ENCODE measurements at regions of chr7 and their contacts with region 1.

Region 1: GRCh38 chr7:127347567-127348246 is 44.8 kb downstream of the ZNF800 start:
- DNase-seq: peak; percentile 48 to 90 (median 68)
- ATAC-seq: peak; percentile 99
- H3K4me3 ChIP-seq: peak overlapping the region; percentile 38
- H3K4me3 Mint-ChIP-seq: peak overlapping the region; percentile 36
- H3K27ac ChIP-seq: no peak overlapping the region
- H3K27ac Mint-ChIP-seq: no peak overlapping the region
- H3K4me1 ChIP-seq: peaks cover 7% of the 10 kb centered on the region
- H3K4me1 Mint-ChIP-seq: peaks cover 36% of the 10 kb centered on the region
- H3K27me3 ChIP-seq: no peaks in the 10 kb centered on the region
- H3K27me3 Mint-ChIP-seq: no peaks in the 10 kb centered on the region
- CTCF ChIP-seq: peak; percentile 42

Region 2: GRCh38 chr7:127239814-127240213 is 107.9 kb before region 1 on chr7:
- CTCF ChIA-PET with region 1: no interaction called
- POLR2A ChIA-PET with region 1: no interaction called
- intact Hi-C with region 1: no loop called
- DNase-seq: no peak
- ATAC-seq: no peak
- H3K4me3 ChIP-seq: no peak overlapping the region
- H3K4me3 Mint-ChIP-seq: no peak overlapping the region
- H3K27ac ChIP-seq: no peak overlapping the region
- H3K27ac Mint-ChIP-seq: no peak overlapping the region
- H3K4me1 ChIP-seq: no peaks in the 10 kb centered on the region
- H3K4me1 Mint-ChIP-seq: no peaks in the 10 kb centered on the region
- H3K27me3 ChIP-seq: peaks cover 0 to 29% of the 10 kb centered on the region in 2 experiments
- H3K27me3 Mint-ChIP-seq: peaks cover 66% of the 10 kb centered on the region
- CTCF ChIP-seq: no peak

Region 3: DNA sequence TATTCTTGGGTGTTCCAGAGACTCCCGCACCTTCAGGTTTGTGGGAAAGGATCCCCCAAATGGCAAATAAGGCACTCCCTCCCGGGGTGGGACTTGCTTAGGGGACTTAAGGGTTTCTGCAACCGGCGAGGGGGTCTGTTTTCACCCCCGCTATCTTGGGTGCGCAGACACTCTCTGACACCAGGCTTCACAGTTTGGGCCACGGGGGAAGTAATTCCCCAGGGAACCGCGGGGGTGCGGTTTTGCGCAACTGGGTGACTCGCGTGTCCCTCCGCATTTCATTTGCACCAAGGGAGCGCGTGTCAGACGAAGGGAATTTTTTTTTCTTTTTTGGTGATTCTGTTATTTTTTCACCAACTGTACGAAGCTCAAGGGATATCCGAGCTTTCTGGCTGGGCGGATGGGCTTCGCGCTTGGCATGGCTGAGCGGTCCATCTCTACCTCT is 96.7 kb before region 1 on chr7:
- CTCF ChIA-PET with region 1: no interaction called
- POLR2A ChIA-PET with region 1: no interaction called
- intact Hi-C with region 1: no loop called
- DNase-seq: peak in 2 of 14 experiments; percentile 17 to 19
- ATAC-seq: no peak
- H3K4me3 ChIP-seq: no peak overlapping the region
- H3K4me3 Mint-ChIP-seq: peak overlapping the region; percentile 69
- H3K27ac ChIP-seq: no peak overlapping the region
- H3K27ac Mint-ChIP-seq: no peak overlapping the region
- H3K4me1 ChIP-seq: peaks cover 33% of the 10 kb centered on the region
- H3K4me1 Mint-ChIP-seq: peaks cover 27% of the 10 kb centered on the region
- H3K27me3 ChIP-seq: peaks cover 45 to 79% of the 10 kb centered on the region in 2 experiments
- H3K27me3 Mint-ChIP-seq: peaks cover 84% of the 10 kb centered on the region
- CTCF ChIP-seq: no peak

Region 4: DNA sequence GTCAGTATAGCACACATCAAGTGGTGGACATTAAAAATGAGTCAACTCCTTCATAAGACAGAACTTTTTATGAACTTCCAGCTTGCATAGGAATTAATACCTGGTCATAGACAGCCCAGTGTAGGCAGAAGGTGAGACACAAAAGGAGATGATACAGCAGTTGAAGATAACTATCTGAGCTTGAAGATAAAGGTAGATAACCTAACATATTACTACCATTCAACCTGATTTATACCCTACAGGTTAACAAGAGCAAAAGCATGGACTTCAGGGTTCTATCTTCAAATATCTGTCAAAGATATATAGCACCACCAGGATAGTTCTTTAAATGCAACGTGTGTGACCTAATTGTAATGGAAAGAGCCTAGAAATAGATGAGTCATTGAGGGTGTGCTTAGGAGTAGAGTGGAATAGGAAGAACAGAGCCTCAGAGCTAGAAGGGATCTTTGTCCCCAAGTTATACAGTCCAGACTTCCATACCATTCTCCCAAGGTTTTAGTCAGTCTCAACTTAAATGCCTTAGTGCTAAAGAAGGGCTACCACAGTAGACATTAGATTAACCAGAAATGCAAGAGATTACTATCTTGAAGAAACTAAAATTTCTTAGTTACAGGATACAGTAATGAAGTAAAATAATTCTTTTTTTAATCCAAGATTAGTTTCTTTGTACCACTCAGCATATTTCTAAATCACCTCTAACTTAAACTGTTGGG is 35.6 kb after region 1 on chr7:
- CTCF ChIA-PET with region 1: interaction called, 3 read pairs
- POLR2A ChIA-PET with region 1: no interaction called
- intact Hi-C with region 1: loop called in 1 of 2 experiments (anchors 5 kb)
- DNase-seq: no peak
- ATAC-seq: no peak
- H3K4me3 ChIP-seq: no peak overlapping the region
- H3K4me3 Mint-ChIP-seq: no peak overlapping the region
- H3K27ac ChIP-seq: no peak overlapping the region
- H3K27ac Mint-ChIP-seq: peak overlapping the region; percentile 11
- H3K4me1 ChIP-seq: peaks cover 7% of the 10 kb centered on the region
- H3K4me1 Mint-ChIP-seq: peaks cover 88% of the 10 kb centered on the region
- H3K27me3 ChIP-seq: no peaks in the 10 kb centered on the region
- H3K27me3 Mint-ChIP-seq: no peaks in the 10 kb centered on the region
- CTCF ChIP-seq: no peak

Region 5: GRCh38 chr7:127447326-127447945 is 99.7 kb after region 1 on chr7:
- CTCF ChIA-PET with region 1: interaction called, 34 read pairs
- POLR2A ChIA-PET with region 1: interaction called, 9 read pairs
- intact Hi-C with region 1: loop called (anchors 1 to 2 kb)
- DNase-seq: peak; percentile 17 to 83 (median 34)
- ATAC-seq: peak; percentile 90
- H3K4me3 ChIP-seq: no peak overlapping the region
- H3K4me3 Mint-ChIP-seq: no peak overlapping the region
- H3K27ac ChIP-seq: no peak overlapping the region
- H3K27ac Mint-ChIP-seq: no peak overlapping the region
- H3K4me1 ChIP-seq: peaks cover 12% of the 10 kb centered on the region
- H3K4me1 Mint-ChIP-seq: peaks cover 33% of the 10 kb centered on the region
- H3K27me3 ChIP-seq: peaks cover 0 to 4% of the 10 kb centered on the region in 2 experiments
- H3K27me3 Mint-ChIP-seq: peaks cover 16% of the 10 kb centered on the region
- CTCF ChIP-seq: peak; percentile 74

Region 6: DNA sequence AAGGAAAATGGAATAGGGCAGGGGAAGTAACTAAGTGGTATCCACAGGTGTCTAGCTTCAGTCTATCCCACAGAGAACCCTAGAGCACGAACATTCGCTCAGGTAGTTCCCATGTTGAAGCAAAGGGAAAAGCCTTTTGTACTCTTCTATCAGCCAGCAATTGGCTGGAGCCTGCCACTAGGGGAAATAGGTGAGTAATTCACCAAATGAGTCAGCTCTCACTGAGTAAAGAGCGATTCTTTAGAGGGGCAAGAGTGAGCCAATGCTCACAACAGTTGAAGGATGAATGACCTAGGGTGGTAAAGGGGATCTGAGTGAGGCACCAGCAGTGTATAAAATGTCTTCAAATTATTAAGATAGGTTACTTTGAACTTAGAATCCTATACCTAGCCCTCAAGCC is 138.9 kb after region 1 on chr7:
- CTCF ChIA-PET with region 1: no interaction called
- POLR2A ChIA-PET with region 1: no interaction called
- intact Hi-C with region 1: no loop called
- DNase-seq: no peak
- ATAC-seq: no peak
- H3K4me3 ChIP-seq: no peak overlapping the region
- H3K4me3 Mint-ChIP-seq: no peak overlapping the region
- H3K27ac ChIP-seq: no peak overlapping the region
- H3K27ac Mint-ChIP-seq: no peak overlapping the region
- H3K4me1 ChIP-seq: no peaks in the 10 kb centered on the region
- H3K4me1 Mint-ChIP-seq: peaks cover 13% of the 10 kb centered on the region
- H3K27me3 ChIP-seq: no peaks in the 10 kb centered on the region
- H3K27me3 Mint-ChIP-seq: peaks cover 27% of the 10 kb centered on the region
- CTCF ChIP-seq: no peak